ENCODE measurements at regions of chr11 and their contacts with region 1.

Region 1: DNA sequence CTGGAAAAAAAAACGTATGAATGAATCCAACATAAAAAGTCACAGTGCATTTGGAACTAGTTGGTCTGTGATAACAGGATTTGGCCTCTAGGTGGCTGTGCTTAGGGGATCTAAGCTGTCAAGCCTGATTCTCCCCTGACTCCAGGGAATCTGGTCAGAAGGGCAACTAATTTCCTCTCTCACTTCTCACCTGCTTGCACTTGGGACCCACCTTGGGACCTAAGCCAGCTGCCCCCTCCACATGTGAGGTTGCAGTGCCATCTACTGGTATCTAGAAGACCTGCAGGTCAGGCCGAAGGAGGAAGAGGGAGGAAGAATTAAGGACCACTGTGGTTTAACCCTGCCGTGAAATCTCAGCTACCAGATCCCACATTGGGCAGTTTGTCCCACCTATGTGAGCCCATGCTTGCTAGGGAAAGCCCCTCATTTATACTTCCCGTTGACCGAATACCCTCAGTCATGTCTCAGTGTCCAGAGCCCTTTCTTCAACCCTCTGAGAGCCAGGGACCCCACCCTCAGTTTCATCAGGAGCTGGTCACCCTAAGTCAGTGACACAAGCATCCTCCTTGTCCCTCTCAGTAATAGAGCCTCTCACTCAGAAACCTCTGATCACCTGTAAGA is 33.2 kb upstream of the CAVIN3 start:
- DNase-seq: peak; percentile 66
- ATAC-seq: peak; percentile 91
- H3K4me3 Mint-ChIP-seq: no peak overlapping the region
- H3K27ac Mint-ChIP-seq: no peak overlapping the region
- H3K4me1 Mint-ChIP-seq: peaks cover 2% of the 10 kb centered on the region
- H3K27me3 Mint-ChIP-seq: peaks cover 9% of the 10 kb centered on the region

Region 2: GRCh38 chr11:6251120-6251733 is 102.2 kb before region 1 on chr11:
- CTCF ChIA-PET with region 1: interaction called, 23 read pairs
- POLR2A ChIA-PET with region 1: no interaction called
- DNase-seq: peak; percentile 68
- ATAC-seq: peak; percentile 77
- H3K4me3 Mint-ChIP-seq: no peak overlapping the region
- H3K27ac Mint-ChIP-seq: no peak overlapping the region
- H3K4me1 Mint-ChIP-seq: no peaks in the 10 kb centered on the region
- H3K27me3 Mint-ChIP-seq: peaks cover 4% of the 10 kb centered on the region

Region 3: DNA sequence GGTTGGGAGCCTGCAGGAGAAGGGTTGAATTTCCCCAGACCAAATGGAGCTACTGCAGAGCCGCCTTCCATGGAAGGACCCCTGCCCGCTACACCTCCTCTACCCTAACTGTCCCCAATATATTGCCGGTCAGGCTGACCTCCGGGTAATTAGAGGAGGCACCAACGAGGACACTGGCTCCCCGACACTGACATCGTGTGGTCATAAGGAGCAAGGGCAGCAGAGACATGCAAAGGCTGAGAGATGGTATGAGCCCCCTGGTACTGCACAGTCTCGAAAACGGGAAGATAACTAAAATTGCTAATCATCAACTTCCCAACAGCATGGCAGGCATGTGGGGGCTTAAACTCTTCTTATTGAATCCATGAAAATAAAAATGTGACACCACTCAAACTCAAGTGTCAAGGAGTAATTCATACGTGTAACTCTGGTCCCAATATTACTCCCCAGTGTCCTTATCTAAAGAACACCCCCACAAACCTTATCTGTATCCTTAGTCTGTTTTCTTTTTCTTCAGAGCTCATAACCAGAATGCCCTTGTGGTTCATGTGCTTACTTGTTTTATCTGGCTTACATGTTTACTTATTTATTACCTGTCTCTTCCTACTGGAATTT is 37.6 kb before region 1 on chr11:
- CTCF ChIA-PET with region 1: interaction called, 22 read pairs
- POLR2A ChIA-PET with region 1: no interaction called
- DNase-seq: peak; percentile 48
- ATAC-seq: peak; percentile 52
- H3K4me3 Mint-ChIP-seq: no peak overlapping the region
- H3K27ac Mint-ChIP-seq: no peak overlapping the region
- H3K4me1 Mint-ChIP-seq: peaks cover 13% of the 10 kb centered on the region
- H3K27me3 Mint-ChIP-seq: peaks cover 37% of the 10 kb centered on the region

Region 4: DNA sequence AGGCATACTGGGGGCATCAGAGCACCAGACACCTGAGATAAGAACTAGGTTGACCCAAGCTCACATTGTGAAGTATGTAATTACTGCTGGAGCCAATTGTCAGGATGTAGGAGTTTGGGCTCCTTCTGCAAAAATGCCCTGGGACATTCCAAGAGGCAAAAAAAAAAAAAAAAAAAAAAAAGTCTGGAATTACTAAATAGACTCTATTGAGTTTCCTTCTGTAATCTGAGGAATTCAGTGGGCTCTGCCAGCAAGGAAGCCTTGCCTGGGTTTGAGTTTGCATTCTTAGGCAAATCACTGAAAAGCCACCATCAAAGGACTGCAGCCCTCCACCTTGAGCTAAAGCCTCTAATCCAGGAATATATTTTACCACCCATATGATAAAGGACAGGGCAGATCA is 25.2 kb before region 1 on chr11:
- CTCF ChIA-PET with region 1: interaction called, 19 read pairs
- POLR2A ChIA-PET with region 1: no interaction called
- DNase-seq: no peak
- ATAC-seq: no peak
- H3K4me3 Mint-ChIP-seq: no peak overlapping the region
- H3K27ac Mint-ChIP-seq: no peak overlapping the region
- H3K4me1 Mint-ChIP-seq: no peaks in the 10 kb centered on the region
- H3K27me3 Mint-ChIP-seq: peaks cover 21% of the 10 kb centered on the region

Measured in activated CD8-positive, alpha-beta T cell treated with anti-CD3 and anti-CD28 coated beads, Interleukin-2, amount 10 ng/mL, durations not matched to agents 7 days and 5 days (primary cell).